ENCODE measurements at regions of chr5 and their contacts with region 1.

Region 1: DNA sequence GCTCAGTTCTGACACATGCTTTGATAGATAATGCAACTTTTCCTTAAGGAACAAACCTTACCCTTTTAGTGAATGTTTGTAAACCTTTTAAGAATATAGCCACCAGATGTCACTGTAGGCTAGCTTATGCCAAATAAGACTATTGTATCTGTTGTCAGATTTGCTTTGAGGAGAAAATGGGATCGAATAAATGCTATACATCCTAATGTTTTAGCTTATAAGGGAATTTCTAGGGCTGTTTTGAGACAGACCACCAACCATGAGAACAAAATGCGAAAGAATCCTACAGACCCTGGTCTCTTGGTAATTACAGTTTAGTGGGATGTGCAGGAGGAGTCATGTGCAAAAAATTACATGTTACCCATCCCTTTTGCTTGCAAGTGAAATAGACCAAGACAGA is 127.6 kb upstream of the NMUR2 start:
- DNase-seq: no peak
- ATAC-seq: no peak

Region 2: DNA sequence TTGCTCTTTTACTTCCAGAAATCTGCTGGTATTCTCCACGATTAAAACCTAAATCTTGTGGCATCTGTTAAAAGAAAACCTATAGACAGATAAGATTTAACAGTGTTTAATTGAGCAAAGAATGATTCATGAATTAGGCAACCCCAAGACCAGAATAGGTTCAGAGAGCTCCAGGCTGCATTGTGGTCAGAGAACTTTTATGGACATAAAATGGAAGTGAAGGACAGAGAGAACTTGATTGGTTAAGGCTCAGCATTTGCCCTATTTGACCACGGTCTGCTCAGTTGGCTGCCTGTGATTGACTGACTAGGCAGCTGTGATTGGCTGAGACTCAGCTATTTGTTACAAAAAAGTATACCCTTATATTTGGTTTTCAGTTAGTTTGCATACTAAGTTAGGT is 1174.9 kb before region 1 on chr5:
- intact Hi-C with region 1: loop called (anchors 5 kb)
- DNase-seq: no peak
- ATAC-seq: no peak

Region 3: DNA sequence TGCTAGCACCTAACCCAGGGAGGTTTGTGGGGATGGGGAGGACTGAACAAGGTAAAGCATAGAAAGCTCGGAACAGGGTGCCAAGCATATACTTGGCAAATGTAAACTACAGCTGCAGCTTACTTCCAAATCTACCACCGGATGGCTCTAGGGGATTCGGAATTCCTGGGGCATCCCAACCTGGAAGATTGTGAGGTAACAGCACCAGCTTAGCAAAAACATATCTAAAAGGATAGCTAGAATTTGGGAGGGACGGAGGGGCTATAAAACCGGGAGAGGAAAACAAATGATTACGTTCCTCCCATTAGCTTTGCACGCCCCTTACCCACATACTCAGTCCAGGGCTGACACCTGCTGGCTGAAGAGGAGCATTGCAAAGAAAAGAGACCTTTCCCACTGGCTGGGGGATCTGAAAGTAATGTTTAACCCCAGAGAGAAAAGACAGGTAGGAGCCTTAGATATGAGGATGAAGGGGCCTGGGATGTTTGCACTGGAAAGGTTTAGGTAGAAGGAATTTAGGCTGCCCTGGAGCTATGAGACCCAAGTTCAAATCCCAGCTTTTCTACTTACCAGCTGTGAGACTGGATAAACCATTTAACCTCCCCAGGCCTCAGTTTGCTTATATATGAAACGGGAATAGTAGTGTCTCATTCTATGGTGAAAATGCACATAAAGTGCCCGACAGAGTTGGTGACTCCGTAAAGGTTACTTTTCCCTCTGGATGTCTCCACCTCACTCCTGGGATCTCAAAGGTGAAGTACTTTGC is 1432.3 kb after region 1 on chr5:
- intact Hi-C with region 1: loop called (anchors 10 kb)
- DNase-seq: no peak
- ATAC-seq: peak; percentile 81